Activated CD8-positive, alpha-beta T cell treated with anti-CD3 and anti-CD28 coated beads, Interleukin-2, amount 10 ng/mL, durations not matched to agents 7 days and 5 days (primary cell): ENCODE measurements at regions of chr19 and their contacts with region 1.

Region 1: DNA sequence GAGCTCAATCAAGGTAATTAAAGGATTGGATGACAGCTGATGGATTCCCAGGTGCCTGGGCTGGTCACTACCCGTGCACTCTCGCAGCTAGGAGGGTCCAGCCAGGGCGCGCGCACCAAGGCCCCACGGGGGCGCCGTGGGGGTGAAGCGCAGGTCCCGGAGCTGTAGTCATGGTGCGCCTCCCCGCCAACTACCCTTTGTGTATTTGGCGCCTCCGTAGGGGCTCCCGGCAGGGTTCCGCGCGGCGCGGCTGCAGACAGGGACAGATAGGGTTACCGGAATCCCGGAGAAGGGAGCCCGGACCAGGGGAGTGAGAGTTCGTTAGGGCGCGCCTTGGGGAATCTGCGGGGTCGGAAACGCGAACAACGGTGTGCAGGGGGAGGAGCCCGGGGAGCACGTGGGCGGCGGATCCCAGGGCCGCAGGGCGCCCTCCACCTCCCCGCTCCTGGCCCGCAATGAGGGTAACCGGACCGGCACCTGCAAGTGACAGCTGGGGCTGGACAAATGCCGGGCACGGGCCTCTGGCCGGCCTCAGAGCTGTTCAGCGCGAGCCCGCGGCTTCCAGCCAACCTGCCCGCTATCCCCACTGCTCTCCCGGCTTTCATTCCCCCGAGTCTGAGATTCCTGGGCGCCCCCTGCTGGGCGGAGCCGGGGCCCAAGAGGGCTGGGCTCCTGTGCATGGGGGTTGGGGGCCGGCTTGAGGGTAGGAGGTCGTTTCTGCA is 3.4 kb upstream of the PRAM1 start:
- DNase-seq: peak; percentile 67
- ATAC-seq: peak; percentile 84
- H3K4me3 Mint-ChIP-seq: peak overlapping the region; percentile 84
- H3K27ac Mint-ChIP-seq: peak overlapping the region; percentile 81
- H3K4me1 Mint-ChIP-seq: peaks cover 41% of the 10 kb centered on the region
- H3K27me3 Mint-ChIP-seq: no peaks in the 10 kb centered on the region

Region 2: DNA sequence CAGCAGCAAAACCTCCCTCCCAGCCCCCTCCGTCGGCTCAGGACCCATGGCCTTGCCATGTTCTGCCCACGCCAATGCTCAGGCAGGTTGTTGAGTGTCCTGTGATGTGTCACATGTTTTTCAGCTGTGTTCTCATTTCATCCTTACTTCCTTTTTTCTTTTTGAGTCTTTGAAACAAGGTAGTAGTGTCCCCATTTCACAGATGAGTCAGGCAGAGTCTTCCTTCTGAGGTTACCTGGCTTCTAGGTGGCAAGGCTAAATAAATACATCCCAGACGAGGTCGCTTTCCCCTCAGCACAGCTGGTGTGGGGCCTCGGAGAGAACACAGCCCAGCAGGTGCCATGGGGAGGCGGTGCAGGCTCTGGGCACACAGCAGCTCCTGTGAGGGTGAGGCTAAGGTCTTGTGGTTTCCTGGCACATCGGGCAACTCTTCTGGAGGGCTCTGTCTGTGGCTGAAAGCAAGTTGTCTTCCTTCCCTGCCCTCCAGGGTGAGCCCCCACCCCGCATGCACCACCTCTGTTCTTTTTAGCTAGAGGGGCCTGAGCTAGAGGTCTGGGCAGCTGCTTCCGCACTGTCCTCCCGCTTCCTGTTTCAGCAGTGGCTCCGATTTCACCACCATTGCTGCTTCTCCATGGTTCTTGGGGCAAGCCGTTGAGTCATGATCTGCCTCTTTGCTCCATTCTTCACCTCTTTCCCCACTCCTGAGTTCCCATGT is 18.5 kb before region 1 on chr19:
- CTCF ChIA-PET with region 1: interaction called, 16 read pairs
- POLR2A ChIA-PET with region 1: interaction called, 3 read pairs
- DNase-seq: peak; percentile 80
- ATAC-seq: peak; percentile 86
- H3K4me3 Mint-ChIP-seq: peak overlapping the region; percentile 35
- H3K27ac Mint-ChIP-seq: peak overlapping the region; percentile 90
- H3K4me1 Mint-ChIP-seq: peaks cover 48% of the 10 kb centered on the region
- H3K27me3 Mint-ChIP-seq: no peaks in the 10 kb centered on the region

Region 3: GRCh38 chr19:8494158-8494557 is 11.7 kb before region 1 on chr19:
- CTCF ChIA-PET with region 1: interaction called, 26 read pairs
- POLR2A ChIA-PET with region 1: no interaction called
- DNase-seq: peak; percentile 46
- ATAC-seq: peak; percentile 68
- H3K4me3 Mint-ChIP-seq: no peak overlapping the region
- H3K27ac Mint-ChIP-seq: peak overlapping the region; percentile 86
- H3K4me1 Mint-ChIP-seq: peaks cover 32% of the 10 kb centered on the region
- H3K27me3 Mint-ChIP-seq: no peaks in the 10 kb centered on the region